CD4-positive, alpha-beta memory T cell (primary cell): ENCODE measurements at regions of chr5 and their contacts with region 1.

Region 1: GRCh38 chr5:55691265-55692105 is 20.6 kb downstream of the SLC38A9 start:
- DNase-seq: peak in 4 of 5 donors; percentile 34 to 44 (median 40)
- H3K4me3 ChIP-seq: no peak overlapping the region
- H3K4me3 Mint-ChIP-seq: no peak overlapping the region
- H3K27ac ChIP-seq: no peak overlapping the region
- H3K27ac Mint-ChIP-seq: peak overlapping the region in 1 of 7 donors; percentile 77
- H3K4me1 ChIP-seq: no peaks in the 10 kb centered on the region
- H3K4me1 Mint-ChIP-seq: peaks cover 0 to 6% (median 2%) of the 10 kb centered on the region in 4 donors
- H3K27me3 ChIP-seq: no peaks in the 10 kb centered on the region
- H3K27me3 Mint-ChIP-seq: no peaks in the 10 kb centered on the region

Region 2: DNA sequence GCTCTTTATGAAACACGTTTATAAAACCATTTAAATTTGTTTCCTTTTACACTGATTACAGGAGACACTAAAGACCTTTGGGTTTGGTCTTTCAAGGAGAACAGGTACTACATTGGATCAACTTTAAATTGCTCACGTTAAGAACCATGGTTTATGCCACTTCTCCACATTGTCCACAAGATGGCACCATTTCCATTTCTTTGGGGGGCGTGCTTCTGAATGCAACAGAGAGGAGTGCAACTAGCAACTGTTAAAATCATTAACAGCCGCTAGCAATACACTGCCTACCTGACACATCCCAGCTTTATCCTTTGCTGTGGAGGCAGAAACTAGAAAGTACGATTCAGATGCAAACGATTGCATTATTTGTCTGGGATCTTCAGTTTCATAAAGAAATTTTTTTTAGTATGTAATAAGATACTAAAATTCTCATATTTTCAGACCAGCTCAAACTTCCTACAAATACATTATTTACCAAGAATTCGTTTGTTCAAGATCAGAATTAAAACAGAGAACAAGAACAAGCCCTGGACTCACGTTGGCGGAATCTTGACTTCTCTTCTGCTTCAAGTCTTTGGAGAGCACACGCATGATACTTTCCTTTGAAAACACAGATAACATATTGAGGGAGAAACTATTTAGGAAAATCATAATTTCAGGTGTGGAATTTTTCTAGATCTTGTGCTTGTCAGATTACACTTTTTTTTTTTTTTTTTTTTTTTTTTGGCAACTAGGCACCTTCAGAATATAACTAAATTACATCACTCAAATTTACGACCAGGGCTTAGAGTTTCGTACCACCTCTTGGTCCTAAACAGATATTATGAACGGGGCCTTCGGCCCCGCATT is 519.2 kb before region 1 on chr5:
- CTCF ChIA-PET with region 1: interaction called, 26 read pairs
- POLR2A ChIA-PET with region 1: no interaction called
- intact Hi-C with region 1: loop called (anchors 1 kb)
- DNase-seq: peak; percentile 74 to 80 (median 76)
- H3K4me3 ChIP-seq: peak overlapping the region in 1 of 2 donors; percentile 32
- H3K4me3 Mint-ChIP-seq: peak overlapping the region; percentile 84 to 91 (median 87)
- H3K27ac ChIP-seq: peak overlapping the region; percentile 34
- H3K27ac Mint-ChIP-seq: peak overlapping the region in 5 of 7 donors; percentile 41 to 94 (median 89)
- H3K4me1 ChIP-seq: peaks cover 34% of the 10 kb centered on the region
- H3K4me1 Mint-ChIP-seq: peaks cover 19 to 46% (median 28%) of the 10 kb centered on the region in 4 donors
- H3K27me3 ChIP-seq: peaks cover 35% of the 10 kb centered on the region
- H3K27me3 Mint-ChIP-seq: peaks cover 47 to 63% of the 10 kb centered on the region in 2 donors

Region 3: GRCh38 chr5:55344392-55344992 is 347.0 kb before region 1 on chr5:
- CTCF ChIA-PET with region 1: interaction called, 22 read pairs
- POLR2A ChIA-PET with region 1: no interaction called
- intact Hi-C with region 1: loop called (anchors 1 kb)
- DNase-seq: peak; percentile 38 to 59 (median 55)
- H3K4me3 ChIP-seq: no peak overlapping the region
- H3K4me3 Mint-ChIP-seq: no peak overlapping the region
- H3K27ac ChIP-seq: no peak overlapping the region
- H3K27ac Mint-ChIP-seq: peak overlapping the region in 4 of 7 donors; percentile 57 to 82 (median 72)
- H3K4me1 ChIP-seq: no peaks in the 10 kb centered on the region
- H3K4me1 Mint-ChIP-seq: peaks cover 0 to 6% (median 3%) of the 10 kb centered on the region in 4 donors
- H3K27me3 ChIP-seq: no peaks in the 10 kb centered on the region
- H3K27me3 Mint-ChIP-seq: no peaks in the 10 kb centered on the region

Region 4: DNA sequence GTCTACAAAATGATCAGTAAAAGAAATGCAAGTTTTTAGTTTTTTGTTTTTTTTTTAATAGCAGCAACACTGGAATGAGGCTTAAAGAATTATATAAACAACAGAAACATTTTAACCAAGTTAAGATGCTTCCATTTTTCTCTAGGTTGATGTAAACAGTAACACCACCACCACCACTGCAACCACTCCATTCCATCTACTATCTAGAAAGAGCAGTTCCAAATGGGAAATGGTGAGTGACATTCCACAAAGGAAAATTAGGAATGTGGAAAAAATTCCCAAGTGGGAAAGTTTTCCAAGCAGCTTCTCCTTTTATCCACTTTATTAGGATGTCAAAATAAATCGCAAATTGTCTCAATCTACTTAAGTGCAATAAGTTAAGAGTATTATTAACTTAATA is 11.9 kb before region 1 on chr5:
- CTCF ChIA-PET with region 1: interaction called, 13 read pairs
- POLR2A ChIA-PET with region 1: no interaction called
- intact Hi-C with region 1: no loop called
- DNase-seq: no peak
- H3K4me3 ChIP-seq: no peak overlapping the region
- H3K4me3 Mint-ChIP-seq: no peak overlapping the region
- H3K27ac ChIP-seq: no peak overlapping the region
- H3K27ac Mint-ChIP-seq: no peak overlapping the region
- H3K4me1 ChIP-seq: no peaks in the 10 kb centered on the region
- H3K4me1 Mint-ChIP-seq: peaks cover 0 to 4% (median 1%) of the 10 kb centered on the region in 4 donors
- H3K27me3 ChIP-seq: no peaks in the 10 kb centered on the region
- H3K27me3 Mint-ChIP-seq: no peaks in the 10 kb centered on the region

Region 5: GRCh38 chr5:56200856-56201666 is 509.6 kb after region 1 on chr5:
- CTCF ChIA-PET with region 1: interaction called, 3 read pairs
- POLR2A ChIA-PET with region 1: no interaction called
- intact Hi-C with region 1: loop called (anchors 2 kb)
- DNase-seq: peak; percentile 59 to 66 (median 63)
- H3K4me3 ChIP-seq: no peak overlapping the region
- H3K4me3 Mint-ChIP-seq: peak overlapping the region in 1 of 8 donors; percentile 24
- H3K27ac ChIP-seq: no peak overlapping the region
- H3K27ac Mint-ChIP-seq: peak overlapping the region in 2 of 7 donors; percentile 2 to 38
- H3K4me1 ChIP-seq: peaks cover 12% of the 10 kb centered on the region
- H3K4me1 Mint-ChIP-seq: peaks cover 17 to 29% (median 24%) of the 10 kb centered on the region in 4 donors
- H3K27me3 ChIP-seq: no peaks in the 10 kb centered on the region
- H3K27me3 Mint-ChIP-seq: no peaks in the 10 kb centered on the region